Naive thymus-derived CD8-positive, alpha-beta T cell (primary cell): ENCODE measurements at regions of chr22 and their contacts with region 1.

Region 1: DNA sequence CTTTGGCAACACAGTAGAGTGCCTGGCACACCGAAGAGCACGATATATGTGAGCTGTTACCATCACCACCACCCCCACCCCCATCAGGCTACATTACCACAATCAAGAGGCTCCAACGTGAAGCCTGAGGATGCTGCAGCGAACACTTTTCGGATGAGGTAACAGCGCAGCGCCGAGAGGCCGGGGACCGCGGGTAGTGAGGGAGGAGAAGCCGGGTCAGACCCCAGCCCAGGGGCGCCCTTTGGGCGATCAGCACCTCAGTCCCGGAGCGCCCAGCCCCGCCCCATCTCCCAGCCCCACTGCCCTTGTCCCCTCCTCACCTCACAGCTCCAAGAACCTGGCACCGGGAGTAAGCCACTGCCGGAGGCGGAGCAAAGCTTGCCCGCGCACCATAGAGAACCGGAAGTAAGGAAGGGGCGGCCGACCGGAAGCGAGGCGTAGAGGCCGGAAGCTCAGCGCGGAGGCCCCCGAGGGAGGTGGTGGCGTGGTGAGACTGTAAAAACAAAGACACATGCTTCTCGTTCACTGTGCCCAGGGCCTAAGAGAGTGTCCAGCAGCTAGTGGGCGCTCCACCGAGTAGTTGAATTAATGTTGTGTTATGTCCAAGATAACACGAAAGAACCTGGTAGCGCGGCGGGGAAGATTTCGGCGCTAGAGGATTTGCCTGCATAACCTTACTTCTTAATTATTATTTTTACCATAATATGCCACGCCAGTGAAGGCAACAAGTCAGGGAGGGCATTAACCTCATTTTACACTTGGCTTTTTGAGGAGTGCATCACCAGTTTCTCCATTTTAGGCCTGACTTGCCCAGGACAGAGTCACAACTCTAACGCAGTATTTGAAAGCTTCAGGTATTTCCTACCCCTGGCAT is at the start of gene THOC5:
- DNase-seq: peak; percentile 74 to 94 (median 85)
- ATAC-seq: peak; percentile 96 to 97
- H3K4me3 Mint-ChIP-seq: peak within 1 kb of the TSS; percentile 83 to 98 (median 96)
- H3K27ac Mint-ChIP-seq: peak within 1 kb of the TSS; percentile 94 to 99 (median 99)
- H3K4me1 Mint-ChIP-seq: peaks cover 15 to 41% (median 30%) of the 10 kb centered on the region in 4 donors
- H3K27me3 Mint-ChIP-seq: peaks cover 0 to 1% (median 0%) of the 10 kb centered on the region in 5 donors
- polyA plus RNA-seq, gene THOC5: 20.1 to 25.7 (median 20.8) TPM

Region 2: GRCh38 chr22:29011240-29012100 is 542.1 kb before region 1 on chr22:
- POLR2A ChIA-PET with region 1: no interaction called
- DNase-seq: no peak
- ATAC-seq: no peak
- H3K4me3 Mint-ChIP-seq: no peak overlapping the region
- H3K27ac Mint-ChIP-seq: no peak overlapping the region
- H3K4me1 Mint-ChIP-seq: peaks cover 7 to 11% (median 9%) of the 10 kb centered on the region in 4 donors
- H3K27me3 Mint-ChIP-seq: peaks cover 18 to 73% (median 23%) of the 10 kb centered on the region in 5 donors

Region 3: DNA sequence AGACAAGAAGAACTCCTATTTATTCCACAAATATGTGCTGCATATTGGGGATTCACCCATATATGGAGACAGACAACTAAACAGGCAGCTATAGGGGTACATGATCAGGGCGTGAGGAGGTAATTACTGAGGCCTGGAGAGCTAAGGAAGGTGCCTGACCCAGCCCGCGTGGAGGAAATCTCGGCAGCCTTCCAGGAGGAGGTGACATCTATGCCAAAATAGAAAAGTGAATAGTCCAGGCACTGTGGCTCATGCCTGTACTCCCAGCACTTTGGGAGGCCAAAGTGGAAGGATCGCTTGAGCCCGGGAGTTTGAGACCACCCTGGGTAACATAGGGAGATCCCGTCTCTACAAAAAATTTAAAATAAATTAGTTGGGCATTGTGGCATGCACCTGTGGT is 13.8 kb after region 1 on chr22:
- POLR2A ChIA-PET with region 1: interaction called, 17 read pairs
- DNase-seq: no peak
- ATAC-seq: no peak
- H3K4me3 Mint-ChIP-seq: no peak overlapping the region
- H3K27ac Mint-ChIP-seq: peak overlapping the region in 1 of 10 donors; percentile 51
- H3K4me1 Mint-ChIP-seq: peaks cover 0 to 5% (median 2%) of the 10 kb centered on the region in 4 donors
- H3K27me3 Mint-ChIP-seq: no peaks in the 10 kb centered on the region

Region 4: GRCh38 chr22:29580200-29580810 is 26.7 kb after region 1 on chr22:
- POLR2A ChIA-PET with region 1: interaction called, 32 read pairs
- DNase-seq: peak in 2 of 10 donors; percentile 5 to 10
- ATAC-seq: peak in 1 of 2 donors; percentile 29
- H3K4me3 Mint-ChIP-seq: peak overlapping the region; percentile 90 to 97 (median 94)
- H3K27ac Mint-ChIP-seq: peak overlapping the region; percentile 75 to 96 (median 94)
- H3K4me1 Mint-ChIP-seq: peaks cover 13 to 25% (median 21%) of the 10 kb centered on the region in 4 donors
- H3K27me3 Mint-ChIP-seq: no peaks in the 10 kb centered on the region

Region 5: GRCh38 chr22:29603358-29604075 is 49.9 kb after region 1 on chr22 and contains the start of gene NF2:
- POLR2A ChIA-PET with region 1: interaction called, 16 read pairs
- DNase-seq: peak; percentile 95 to 99 (median 98)
- ATAC-seq: peak; percentile 94 to 96
- H3K4me3 Mint-ChIP-seq: peak within 1 kb of the TSS; percentile 93 to 98 (median 96)
- H3K27ac Mint-ChIP-seq: peak within 1 kb of the TSS; percentile 89 to 99 (median 98)
- H3K4me1 Mint-ChIP-seq: peaks cover 11 to 37% (median 25%) of the 10 kb centered on the region in 4 donors
- H3K27me3 Mint-ChIP-seq: no peaks in the 10 kb centered on the region
- polyA plus RNA-seq, gene NF2: 15.3 to 16.8 (median 15.5) TPM